Activated naive CD4-positive, alpha-beta T cell treated with anti-CD3 and anti-CD28 coated beads for 36 hours (primary cell): ENCODE measurements at regions of chr4 and their contacts with region 1.

Region 1: GRCh38 chr4:2241410-2242353 is at the starts of genes HAUS3 and POLN:
- DNase-seq: peak; percentile 99
- H3K4me3 Mint-ChIP-seq: peak within 1 kb of the TSS; percentile 87
- H3K27ac Mint-ChIP-seq: peak within 1 kb of the TSS; percentile 84
- H3K4me1 Mint-ChIP-seq: peaks cover 52% of the 10 kb centered on the region
- H3K27me3 Mint-ChIP-seq: no peaks in the 10 kb centered on the region
- total RNA-seq, gene HAUS3: 18.0 to 18.1 TPM
- total RNA-seq, gene POLN: 0.91 to 1.3 TPM

Region 2: DNA sequence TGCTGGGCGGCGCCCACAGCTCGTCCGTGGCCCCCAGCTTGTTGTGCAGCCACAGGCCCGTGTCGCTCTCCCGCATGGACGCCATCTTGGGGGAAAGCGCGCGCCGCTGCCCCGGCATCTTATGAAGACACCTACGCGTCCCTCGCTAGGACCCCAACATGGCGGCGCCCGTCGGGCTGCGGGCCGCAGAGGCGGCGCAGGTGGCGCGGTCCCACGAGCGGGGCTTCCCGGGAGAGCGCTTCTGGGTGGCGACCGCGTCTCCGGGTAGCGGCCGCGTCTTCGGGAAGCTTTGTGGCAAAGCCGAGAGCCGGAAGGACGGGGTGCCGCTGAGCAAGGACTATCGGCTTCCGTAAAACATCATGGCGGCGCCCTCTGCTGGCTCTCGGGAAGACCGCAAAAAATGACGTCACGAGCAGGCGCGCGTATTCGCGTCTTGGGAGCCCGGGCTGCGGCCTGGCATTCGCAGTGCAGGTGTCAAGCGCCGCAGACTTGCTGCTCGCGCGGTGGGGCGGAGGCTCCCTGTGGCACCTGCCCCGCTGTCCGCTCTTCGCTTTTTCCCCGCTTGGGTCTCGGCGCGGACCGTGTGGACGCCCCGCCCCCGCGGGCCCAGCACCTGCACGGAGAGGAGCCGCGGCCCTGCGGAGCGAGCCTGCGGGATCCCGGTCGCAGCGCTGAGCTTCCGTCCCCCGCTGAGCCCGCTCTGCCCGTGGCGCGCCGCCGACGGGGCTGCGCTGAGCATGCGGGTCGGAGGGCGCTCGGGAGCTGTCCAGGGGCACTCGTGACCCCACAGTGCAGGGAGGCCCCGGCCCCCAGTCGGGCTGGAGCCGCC is 232.6 kb before region 1 on chr4 and contains the start of gene NELFA:
- CTCF ChIA-PET with region 1: no interaction called
- intact Hi-C with region 1: loop called (anchors 1 kb)
- DNase-seq: peak; percentile 97
- H3K4me3 Mint-ChIP-seq: peak within 1 kb of the TSS; percentile 85
- H3K27ac Mint-ChIP-seq: peak within 1 kb of the TSS; percentile 87
- H3K4me1 Mint-ChIP-seq: peaks cover 29% of the 10 kb centered on the region
- H3K27me3 Mint-ChIP-seq: no peaks in the 10 kb centered on the region
- total RNA-seq, gene NELFA: 44.1 to 45.3 TPM

Region 3: GRCh38 chr4:2281575-2282343 is 40.1 kb after region 1 on chr4:
- CTCF ChIA-PET with region 1: no interaction called
- intact Hi-C with region 1: loop called (anchors 1 kb)
- DNase-seq: peak; percentile 94
- H3K4me3 Mint-ChIP-seq: peak overlapping the region; percentile 17
- H3K27ac Mint-ChIP-seq: peak overlapping the region; percentile 98
- H3K4me1 Mint-ChIP-seq: peaks cover 37% of the 10 kb centered on the region
- H3K27me3 Mint-ChIP-seq: no peaks in the 10 kb centered on the region

Region 4: DNA sequence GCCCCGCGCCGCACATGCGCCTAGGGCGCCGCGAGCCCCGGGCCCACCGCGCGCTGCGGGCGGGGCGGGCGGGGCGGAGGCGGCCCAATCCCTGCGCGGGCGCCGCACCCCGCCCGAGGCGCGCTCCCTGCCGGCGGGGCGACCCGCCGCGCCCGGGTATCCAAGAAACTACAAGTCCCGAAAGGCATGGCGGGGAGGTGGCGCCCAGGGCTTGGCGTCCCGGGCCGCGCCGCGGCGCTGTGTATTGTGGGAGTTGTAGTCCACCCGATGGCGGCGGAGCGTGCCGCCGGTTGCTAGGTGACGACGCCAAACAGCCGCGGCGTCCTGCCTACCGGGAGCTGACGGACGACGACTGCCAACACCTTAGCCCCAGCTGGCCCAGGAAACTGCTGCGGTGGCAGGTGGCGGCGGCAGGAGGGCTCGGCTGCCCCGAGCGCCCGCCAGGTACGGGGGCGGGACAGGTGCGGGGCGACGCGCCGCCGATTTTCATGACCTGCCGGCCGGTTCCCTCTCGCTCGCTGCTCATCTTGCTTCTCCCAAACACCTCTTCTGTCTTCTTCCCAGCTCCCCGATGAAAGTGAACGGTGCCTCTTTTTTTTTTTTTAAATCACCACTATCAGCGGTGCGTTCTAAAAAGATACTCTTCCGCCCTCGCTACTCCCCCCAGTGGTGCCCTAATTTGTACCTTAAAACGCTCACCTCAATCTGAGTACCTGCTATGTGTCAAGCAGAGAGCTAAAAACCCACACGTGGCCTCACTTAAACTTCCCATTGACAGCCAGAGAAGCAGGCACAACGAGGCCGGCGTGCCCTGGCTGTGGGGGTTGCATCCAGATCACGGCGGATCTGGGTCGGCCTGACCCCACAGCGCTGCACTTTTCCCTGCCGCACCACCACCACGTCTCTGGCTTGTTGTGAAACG is 177.2 kb after region 1 on chr4 and contains the start of gene CFAP99:
- CTCF ChIA-PET with region 1: no interaction called
- intact Hi-C with region 1: loop called (anchors 1 kb)
- DNase-seq: peak; percentile 97
- H3K4me3 Mint-ChIP-seq: peak within 1 kb of the TSS; percentile 81
- H3K27ac Mint-ChIP-seq: no peak within 1 kb of the TSS
- H3K4me1 Mint-ChIP-seq: peaks cover 38% of the 10 kb centered on the region
- H3K27me3 Mint-ChIP-seq: peaks cover 37% of the 10 kb centered on the region
- total RNA-seq, gene CFAP99: not detected

Region 5: DNA sequence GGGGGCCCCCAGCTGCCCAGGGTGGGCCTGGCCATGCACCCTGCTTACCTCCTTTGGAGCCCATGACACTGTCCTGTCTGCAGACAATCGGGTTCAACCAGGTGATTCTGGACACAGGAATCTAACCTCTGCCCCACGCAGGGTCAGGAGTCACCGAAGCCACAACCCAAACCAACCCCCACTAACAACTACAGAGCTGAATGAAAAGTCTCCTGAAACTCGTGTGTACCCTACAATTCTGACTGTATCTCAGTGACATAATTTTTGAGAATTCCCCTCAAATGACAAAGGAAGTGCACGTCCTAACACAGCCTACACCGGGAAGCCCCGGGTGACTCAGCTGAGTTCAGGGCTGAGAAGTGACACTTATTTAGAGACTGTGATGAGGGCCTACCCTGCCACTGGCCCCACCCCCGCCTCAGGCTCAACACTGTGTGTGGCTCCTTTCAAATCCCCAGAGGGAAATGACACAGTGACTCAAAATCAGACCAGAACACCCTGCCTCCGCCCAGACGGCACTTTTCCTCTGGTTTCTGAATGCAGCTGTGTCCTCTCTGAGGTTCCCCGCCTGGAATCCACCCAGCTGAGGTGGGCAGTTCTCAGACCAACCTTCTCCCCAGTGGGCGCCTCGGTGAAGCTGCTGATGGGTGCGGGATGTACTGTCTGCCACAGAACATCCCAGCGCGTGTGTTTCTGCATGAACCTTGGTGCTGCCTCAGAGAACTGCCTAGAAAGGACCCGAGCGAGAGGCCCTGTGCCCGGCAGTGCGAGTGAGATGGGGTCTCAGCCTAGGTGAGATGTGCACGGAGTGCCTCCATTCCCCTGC is 504.5 kb after region 1 on chr4:
- CTCF ChIA-PET with region 1: no interaction called
- intact Hi-C with region 1: loop called (anchors 1 kb)
- DNase-seq: peak; percentile 99
- H3K4me3 Mint-ChIP-seq: peak overlapping the region; percentile 27
- H3K27ac Mint-ChIP-seq: peak overlapping the region; percentile 90
- H3K4me1 Mint-ChIP-seq: peaks cover 64% of the 10 kb centered on the region
- H3K27me3 Mint-ChIP-seq: no peaks in the 10 kb centered on the region